ENCODE measurements at regions of chr2 and their contacts with region 1.

Region 1: DNA sequence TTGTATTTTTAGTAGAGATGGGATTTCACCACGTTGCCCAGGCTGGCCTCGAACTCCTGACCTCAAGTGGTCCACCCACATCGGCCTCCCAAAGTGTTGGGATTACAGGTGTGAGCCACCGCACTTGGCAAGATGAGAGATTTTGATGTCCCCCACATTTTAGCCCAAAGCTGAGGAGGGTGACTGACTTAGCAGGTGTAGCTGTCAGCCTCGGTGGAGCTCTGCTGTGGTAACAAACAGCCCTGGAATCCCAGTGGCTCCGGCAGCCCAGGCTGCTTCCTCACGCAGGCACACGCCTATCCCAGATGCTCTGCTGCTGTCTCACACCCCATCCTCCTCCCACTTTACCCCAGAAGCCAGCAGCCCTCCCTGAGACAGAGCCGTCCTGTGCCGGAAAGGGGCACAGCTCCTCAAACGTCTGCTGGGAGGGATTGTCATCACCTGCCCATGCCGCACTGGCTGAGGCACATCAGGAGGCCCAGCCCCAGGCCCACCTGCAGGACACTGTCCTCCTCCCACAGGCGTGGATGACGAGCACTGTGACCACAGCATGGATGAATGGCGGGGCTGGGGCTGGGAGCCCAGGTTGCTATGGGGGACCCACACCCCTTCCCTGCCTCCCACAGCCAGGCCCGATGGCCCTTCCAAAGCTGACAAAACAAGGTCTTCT is 10.6 kb upstream of the BOK start:
- DNase-seq: no peak
- ATAC-seq: no peak
- H3K4me3 ChIP-seq: no peak overlapping the region
- H3K27ac ChIP-seq: no peak overlapping the region
- H3K4me1 ChIP-seq: no peaks in the 10 kb centered on the region
- H3K27me3 ChIP-seq: no peaks in the 10 kb centered on the region; a peak in 2 of 4 replicates
- CTCF ChIP-seq: no peak
- EP300 ChIP-seq: no peak
- POLR2A ChIP-seq: no peak
- RAD21 ChIP-seq: no peak

Region 2: DNA sequence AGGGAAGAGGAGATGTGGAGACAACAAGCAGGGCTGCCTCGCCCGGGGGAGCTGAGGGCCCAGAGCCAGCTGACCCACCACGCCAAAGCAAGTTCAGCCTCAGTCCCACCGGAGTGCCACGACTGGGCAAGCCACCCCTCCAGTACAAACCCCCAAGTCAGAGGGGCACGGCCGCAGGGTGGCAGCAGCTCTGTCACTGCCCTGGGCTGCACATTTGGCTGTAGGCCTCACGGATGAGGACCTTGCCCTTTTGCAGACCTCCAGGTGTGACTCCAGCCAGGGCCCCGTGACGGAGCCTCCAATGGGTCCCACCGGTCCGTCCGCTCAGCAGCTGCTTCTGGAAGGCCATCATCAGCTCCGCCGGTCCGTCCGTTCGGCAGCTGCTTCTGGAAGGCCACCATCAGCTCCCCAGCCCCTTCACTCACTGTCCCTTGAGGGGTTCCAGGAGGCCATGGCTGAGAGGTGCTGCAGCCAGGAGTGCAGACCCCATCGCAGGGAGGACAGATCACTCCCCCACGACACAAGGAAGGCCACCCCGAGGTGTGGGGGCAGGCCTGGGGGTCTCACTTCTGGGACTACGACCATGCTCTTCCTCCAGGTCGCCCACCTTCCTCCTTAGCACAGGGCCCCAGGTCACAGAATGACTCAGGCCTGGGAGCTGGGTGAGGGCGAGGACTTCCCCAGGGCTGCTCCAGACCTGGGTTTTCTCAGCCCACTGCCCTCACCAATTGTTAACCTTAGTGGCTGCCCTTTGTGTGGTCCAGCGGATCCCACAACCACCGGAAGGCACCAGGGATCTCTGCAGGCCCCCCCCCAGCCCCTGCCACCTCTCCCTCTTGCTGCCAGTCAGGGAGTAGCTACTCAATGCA is 14.9 kb before region 1 on chr2:
- CTCF ChIA-PET with region 1: no interaction called
- POLR2A ChIA-PET with region 1: interaction called, 11 read pairs
- RAD21 ChIA-PET with region 1: no interaction called
- SMC1A ChIA-PET with region 1: no interaction called
- in situ Hi-C with region 1: no loop called
- intact Hi-C with region 1: no loop called
- DNase-seq: no peak
- ATAC-seq: peak; percentile 76
- H3K4me3 ChIP-seq: no peak overlapping the region
- H3K27ac ChIP-seq: no peak overlapping the region
- H3K4me1 ChIP-seq: no peaks in the 10 kb centered on the region; the same call in 1 of the 2 replicates
- H3K27me3 ChIP-seq: peaks cover 0 to 1% of the 10 kb centered on the region in 2 experiments; a peak in 1 of 4 replicates
- CTCF ChIP-seq: no peak
- EP300 ChIP-seq: no peak
- POLR2A ChIP-seq: no peak
- RAD21 ChIP-seq: no peak

Region 3: GRCh38 chr2:241673797-241674725 is 126.1 kb after region 1 on chr2:
- CTCF ChIA-PET with region 1: no interaction called
- POLR2A ChIA-PET with region 1: no interaction called
- RAD21 ChIA-PET with region 1: no interaction called
- SMC1A ChIA-PET with region 1: no interaction called
- in situ Hi-C with region 1: no loop called
- intact Hi-C with region 1: no loop called
- DNase-seq: no peak
- ATAC-seq: peak; percentile 49
- H3K4me3 ChIP-seq: no peak overlapping the region
- H3K27ac ChIP-seq: no peak overlapping the region
- H3K4me1 ChIP-seq: no peaks in the 10 kb centered on the region
- H3K27me3 ChIP-seq: no peaks in the 10 kb centered on the region
- CTCF ChIP-seq: no peak
- EP300 ChIP-seq: no peak
- POLR2A ChIP-seq: peak; percentile 4
- RAD21 ChIP-seq: no peak

Region 4: GRCh38 chr2:241734208-241734466 is 186.2 kb after region 1 on chr2:
- CTCF ChIA-PET with region 1: no interaction called
- POLR2A ChIA-PET with region 1: no interaction called
- RAD21 ChIA-PET with region 1: no interaction called
- SMC1A ChIA-PET with region 1: no interaction called
- in situ Hi-C with region 1: no loop called
- intact Hi-C with region 1: no loop called
- DNase-seq: no peak
- ATAC-seq: peak; percentile 18; the same call in 2 of the 3 replicates
- H3K4me3 ChIP-seq: peak overlapping the region; percentile 61; the same call in 1 of the 2 replicates
- H3K27ac ChIP-seq: no peak overlapping the region; the same call in 1 of the 2 replicates
- H3K4me1 ChIP-seq: 0 out of 2 replicates have a peak, but pooled peaks cover 3% of the 10 kb centered on the region
- H3K27me3 ChIP-seq: no peaks in the 10 kb centered on the region
- CTCF ChIP-seq: no peak
- EP300 ChIP-seq: no peak
- POLR2A ChIP-seq: no peak
- RAD21 ChIP-seq: no peak

Measured in GM12878 (cell line).